PC-9 (cell line): ENCODE measurements at regions of chr13 and their contacts with region 1.

Region 1: DNA sequence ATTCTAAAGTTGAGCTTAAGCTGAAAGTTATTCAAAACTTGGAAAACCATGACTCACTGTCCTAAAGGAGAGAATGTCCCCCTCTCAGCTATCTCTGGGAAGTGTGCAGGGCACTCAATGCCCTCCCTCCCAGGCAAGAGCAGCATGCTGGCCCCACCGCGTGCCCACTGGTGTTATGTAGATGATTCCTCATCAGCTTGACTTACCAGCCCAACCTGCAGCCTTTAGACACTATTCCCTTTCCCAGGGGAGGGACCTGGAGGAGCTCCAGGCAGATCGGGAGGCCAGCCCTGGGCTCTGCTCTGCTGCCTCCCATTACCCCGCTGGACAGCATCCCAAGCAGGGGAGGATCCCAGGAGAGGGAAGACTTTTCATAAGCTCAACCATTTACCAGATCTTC is 124.6 kb downstream of the FGF14 start:
- DNase-seq: no peak
- H3K4me3 ChIP-seq: no peak overlapping the region
- H3K27ac ChIP-seq: no peak overlapping the region
- H3K4me1 ChIP-seq: no peaks in the 10 kb centered on the region
- H3K27me3 ChIP-seq: 0 out of 2 replicates have a peak, but pooled peaks cover 3% of the 10 kb centered on the region
- CTCF ChIP-seq: no peak

Region 2: DNA sequence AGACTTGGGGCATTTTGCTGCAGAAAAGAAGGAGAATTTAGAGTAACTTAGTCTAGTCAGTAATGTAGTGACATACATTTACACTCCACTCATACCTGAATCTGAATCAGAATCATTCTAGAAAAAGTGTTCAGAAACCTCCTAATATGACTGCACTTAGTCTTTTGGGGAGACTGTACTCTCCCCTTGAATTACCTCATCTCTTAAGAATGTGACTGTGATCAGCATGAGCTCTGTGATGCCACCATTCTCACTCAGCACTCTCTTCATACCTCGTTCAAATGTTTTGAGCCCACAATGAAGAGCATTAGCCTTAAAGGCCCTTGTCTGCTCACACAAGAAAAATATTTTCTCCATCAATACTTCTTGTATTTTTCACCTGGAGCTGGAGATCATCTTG is 104.9 kb before region 1 on chr13:
- CTCF ChIA-PET with region 1: interaction called, 17 read pairs
- POLR2A ChIA-PET with region 1: no interaction called
- intact Hi-C with region 1: no loop called
- DNase-seq: no peak
- H3K4me3 ChIP-seq: no peak overlapping the region
- H3K27ac ChIP-seq: no peak overlapping the region
- H3K4me1 ChIP-seq: no peaks in the 10 kb centered on the region
- H3K27me3 ChIP-seq: peaks cover 9% of the 10 kb centered on the region
- CTCF ChIP-seq: no peak

Region 3: GRCh38 chr13:102295316-102296048 is 18.2 kb after region 1 on chr13:
- CTCF ChIA-PET with region 1: no interaction called
- POLR2A ChIA-PET with region 1: no interaction called
- intact Hi-C with region 1: no loop called
- DNase-seq: no peak
- H3K4me3 ChIP-seq: no peak overlapping the region
- H3K27ac ChIP-seq: no peak overlapping the region
- H3K4me1 ChIP-seq: no peaks in the 10 kb centered on the region
- H3K27me3 ChIP-seq: 0 out of 2 replicates have a peak, but pooled peaks cover 14% of the 10 kb centered on the region
- CTCF ChIP-seq: no peak